G401 (cell line): ENCODE measurements at regions of chr15 and their contacts with region 1.

Region 1: GRCh38 chr15:57393061-57393460 is 16.8 kb downstream of the CGNL1 start:
- DNase-seq: no peak

Region 2: DNA sequence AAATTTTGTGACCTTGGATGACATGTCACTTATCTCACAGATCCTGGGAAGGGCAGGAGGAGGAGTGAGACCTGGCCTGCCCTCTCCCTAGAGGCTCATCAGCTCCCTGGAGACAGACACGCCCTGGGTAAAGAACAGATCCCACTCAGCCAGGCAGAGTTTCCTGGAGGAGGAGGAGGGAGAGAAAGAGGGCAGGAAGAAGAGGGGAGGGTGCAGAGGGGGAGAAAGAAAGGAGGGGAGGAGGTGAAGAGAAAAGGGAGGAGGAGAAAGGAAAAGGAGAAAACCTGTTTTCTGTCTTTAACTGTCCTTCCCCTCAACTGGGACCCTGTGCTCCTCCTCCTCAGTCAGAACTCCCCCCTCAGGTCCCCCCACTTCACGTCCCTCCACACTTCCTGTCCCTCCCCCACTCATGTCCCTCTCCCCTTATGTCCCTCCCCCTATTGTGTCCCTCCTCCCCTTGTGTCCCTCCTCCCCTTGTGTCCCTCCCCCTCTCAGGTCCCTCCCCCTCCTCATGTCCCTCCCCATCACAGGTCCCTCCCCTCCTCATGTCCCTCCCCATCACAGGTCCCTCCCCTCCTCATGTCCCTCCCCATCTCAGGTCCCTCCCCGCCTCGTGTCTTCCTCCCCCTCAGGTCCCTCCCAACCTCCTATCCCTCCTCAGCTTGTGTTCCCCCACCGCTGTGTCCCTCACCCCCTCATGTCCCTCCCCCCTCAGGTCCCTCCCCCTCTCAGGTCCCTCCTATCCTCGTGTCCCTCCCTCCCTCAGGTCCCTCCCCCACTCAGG is 69.1 kb before region 1 on chr15:
- in situ Hi-C with region 1: no loop called
- DNase-seq: no peak

Region 3: DNA sequence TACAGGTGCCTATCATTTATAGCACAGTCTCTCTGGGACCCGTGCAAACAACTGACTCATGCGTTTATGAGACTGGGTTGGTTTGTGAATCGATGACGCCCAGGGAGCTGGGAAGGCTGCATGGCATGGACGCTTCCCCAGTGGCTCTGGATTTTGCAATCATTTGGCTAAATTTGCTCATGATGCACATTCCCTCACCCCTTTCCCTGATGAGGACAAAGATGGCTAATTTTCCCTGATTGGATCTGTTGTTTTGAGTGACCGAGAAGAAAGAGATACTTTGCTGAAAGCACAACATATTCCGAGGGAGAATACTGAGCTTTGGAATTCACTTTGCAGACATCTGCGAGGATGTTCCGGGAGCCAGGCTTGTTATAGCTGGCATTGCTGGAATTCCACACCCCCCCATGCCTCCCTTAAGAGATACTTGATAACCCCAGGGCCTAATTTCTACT is 34.3 kb after region 1 on chr15:
- in situ Hi-C with region 1: loop called (anchors 5 kb)
- DNase-seq: no peak

Region 4: DNA sequence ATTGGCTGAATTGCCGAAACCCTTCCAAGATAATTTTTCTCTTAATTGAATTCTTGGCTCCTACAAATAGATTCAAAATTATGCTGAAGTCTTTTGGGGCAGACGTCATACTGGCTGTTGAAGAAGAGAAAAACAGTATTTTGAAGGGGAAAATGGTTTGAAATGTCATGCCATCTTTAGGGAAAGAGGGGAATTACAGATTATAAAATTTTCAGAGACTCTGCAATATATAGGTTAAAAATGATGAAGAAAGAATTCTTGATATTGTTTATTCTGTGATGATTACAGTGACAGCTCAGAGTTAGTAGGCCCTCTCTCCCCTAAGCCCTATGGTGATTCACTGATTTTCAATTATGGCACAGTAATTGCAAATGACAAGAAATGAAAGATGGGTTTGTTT is 69.3 kb after region 1 on chr15:
- in situ Hi-C with region 1: no loop called
- DNase-seq: peak; percentile 8

Region 5: DNA sequence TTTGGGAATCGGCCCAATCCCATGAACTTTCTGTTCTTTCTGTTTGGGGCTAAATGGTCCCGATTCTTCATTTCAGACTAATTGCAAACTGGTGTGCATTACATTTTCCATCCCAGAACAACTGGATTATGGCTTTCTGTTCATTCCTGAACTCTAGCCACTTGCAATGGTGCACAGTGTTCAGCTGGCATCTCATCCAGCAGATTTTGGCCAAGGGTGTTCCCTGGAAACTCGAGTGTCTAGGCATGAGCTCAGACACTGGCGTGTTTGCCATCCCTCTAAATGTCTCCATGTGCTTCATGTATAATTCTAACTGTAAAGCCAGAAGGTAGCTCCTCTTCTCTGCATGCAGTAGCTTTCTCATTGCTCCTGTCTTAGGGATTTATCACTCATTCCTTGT is 101.5 kb after region 1 on chr15:
- in situ Hi-C with region 1: loop called (anchors 5 kb)
- DNase-seq: no peak